Breast epithelium (tissue), 4 donors: ENCODE measurements at regions of chr4 and their contacts with region 1.

Region 1: DNA sequence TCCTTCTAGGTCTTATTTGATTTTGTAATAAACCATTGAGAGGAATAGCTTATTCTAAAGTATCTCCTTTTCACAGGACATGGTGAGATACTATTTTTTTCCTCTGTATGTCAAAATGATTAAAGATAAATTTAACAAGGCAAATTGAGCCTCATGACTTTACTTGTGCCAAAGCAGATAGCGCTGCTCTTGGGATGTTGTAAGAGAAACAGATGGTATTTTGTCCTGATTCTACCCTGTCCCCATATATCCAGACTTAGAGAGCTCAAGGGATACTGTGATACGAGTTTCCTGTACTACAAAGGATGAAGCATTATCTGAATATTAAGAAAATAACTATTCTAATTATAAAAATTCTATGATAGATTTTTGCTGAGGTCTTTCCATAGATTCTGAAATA is 34.0 kb downstream of the EMCN start:
- DNase-seq: no peak
- H3K4me3 ChIP-seq: no peak overlapping the region
- H3K27ac ChIP-seq: no peak overlapping the region
- H3K4me1 ChIP-seq: no peaks in the 10 kb centered on the region
- H3K27me3 ChIP-seq: no peaks in the 10 kb centered on the region
- CTCF ChIP-seq: no peak
- POLR2A ChIP-seq: no peak

Region 2: GRCh38 chr4:100462206-100462605 is 21.6 kb before region 1 on chr4:
- intact Hi-C with region 1: no loop called
- DNase-seq: no peak
- H3K4me3 ChIP-seq: no peak overlapping the region
- H3K27ac ChIP-seq: no peak overlapping the region
- H3K4me1 ChIP-seq: no peaks in the 10 kb centered on the region
- H3K27me3 ChIP-seq: no peaks in the 10 kb centered on the region
- CTCF ChIP-seq: no peak
- POLR2A ChIP-seq: no peak

Region 3: DNA sequence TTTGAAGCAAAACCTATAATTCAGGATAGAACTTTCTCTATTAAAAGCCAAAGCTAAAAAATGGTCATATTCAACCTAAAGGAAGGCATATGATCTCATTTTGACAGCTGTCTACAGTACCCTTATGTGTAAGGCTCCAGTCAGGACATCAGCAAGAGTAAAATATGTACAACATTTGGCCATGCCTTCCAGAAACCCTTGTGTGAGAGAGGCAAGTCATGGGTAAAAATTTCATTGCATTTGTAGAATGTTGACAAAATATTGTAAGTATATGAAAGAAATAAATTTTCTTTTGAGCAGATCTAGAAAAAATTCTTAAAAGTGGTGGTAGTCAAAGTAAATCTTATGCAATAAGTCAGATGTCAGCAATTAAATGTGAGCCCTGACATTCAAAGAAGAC is 1729.2 kb after region 1 on chr4:
- intact Hi-C with region 1: loop called (anchors 5 kb)
- DNase-seq: no peak
- H3K4me3 ChIP-seq: no peak overlapping the region
- H3K27ac ChIP-seq: no peak overlapping the region
- H3K4me1 ChIP-seq: no peaks in the 10 kb centered on the region
- H3K27me3 ChIP-seq: no peaks in the 10 kb centered on the region
- CTCF ChIP-seq: no peak
- POLR2A ChIP-seq: no peak